ENCODE measurements at regions of chr3 and their contacts with region 1.

Region 1: DNA sequence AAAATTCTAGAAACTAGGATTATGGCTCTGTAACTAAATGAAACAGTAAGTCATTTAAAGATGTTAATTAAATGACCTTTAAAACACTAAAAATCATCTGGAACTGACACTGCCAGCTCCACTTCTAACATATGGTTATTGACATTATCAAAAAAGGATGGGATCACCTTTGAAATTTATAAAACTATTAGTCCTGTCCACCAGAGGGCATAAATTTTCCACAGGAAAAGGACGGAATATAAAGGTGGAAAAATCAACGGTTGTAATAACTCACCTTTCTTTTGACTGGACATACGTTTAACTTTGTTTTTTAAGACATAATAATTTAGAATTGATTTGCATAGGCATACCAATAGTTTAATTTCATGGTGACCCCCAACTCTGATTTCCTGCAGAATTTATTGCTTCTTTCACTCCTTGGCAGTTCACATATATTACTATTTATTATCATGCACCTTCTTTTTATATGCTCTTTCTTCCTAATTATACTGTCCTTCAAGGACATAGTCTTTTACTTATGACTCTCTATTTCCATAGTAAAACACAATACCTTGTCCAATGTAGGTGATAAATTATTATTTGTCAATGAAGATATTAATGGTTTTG is 345.7 kb downstream of the CADM2 start:
- DNase-seq: no peak
- H3K4me3 ChIP-seq: no peak overlapping the region
- H3K27ac ChIP-seq: no peak overlapping the region
- H3K4me1 ChIP-seq: no peaks in the 10 kb centered on the region
- H3K27me3 ChIP-seq: no peaks in the 10 kb centered on the region
- CTCF ChIP-seq: peak; percentile 66; the same call in 1 of the 2 replicates

Region 2: DNA sequence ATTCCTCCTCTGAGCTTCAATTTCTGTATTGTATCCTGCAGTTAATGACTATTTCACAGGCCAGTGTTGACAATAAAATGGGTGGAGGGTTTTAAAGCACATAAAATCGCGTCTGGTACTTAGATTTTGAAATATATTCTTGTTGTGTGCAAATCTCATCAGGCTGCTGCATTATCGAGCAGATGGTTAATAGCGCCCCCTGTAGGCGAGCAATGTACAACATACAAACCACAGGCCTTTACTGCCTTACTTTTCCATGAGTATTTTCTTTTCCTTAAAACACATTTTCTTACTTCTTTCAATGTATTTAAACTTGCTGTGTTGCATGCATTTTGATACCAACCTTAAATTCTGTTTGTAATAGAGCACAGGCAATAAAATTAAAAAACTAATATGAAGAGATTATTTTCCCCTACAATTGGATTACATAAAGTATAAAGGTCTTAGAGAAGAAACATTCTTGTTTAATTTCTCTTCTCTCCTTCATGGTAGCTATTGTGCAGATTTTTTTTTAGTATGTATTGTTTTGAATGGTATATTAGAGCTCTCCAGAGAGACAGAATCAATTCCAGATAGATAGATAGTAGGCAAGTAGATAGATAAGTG is 262.7 kb after region 1 on chr3:
- CTCF ChIA-PET with region 1: no interaction called
- POLR2A ChIA-PET with region 1: no interaction called
- intact Hi-C with region 1: loop called (anchors 10 kb)
- DNase-seq: peak in 1 of 2 experiments; percentile 15
- H3K4me3 ChIP-seq: no peak overlapping the region
- H3K27ac ChIP-seq: no peak overlapping the region
- H3K4me1 ChIP-seq: no peaks in the 10 kb centered on the region
- H3K27me3 ChIP-seq: no peaks in the 10 kb centered on the region
- CTCF ChIP-seq: peak; percentile 69

Region 3: GRCh38 chr3:85594676-85595075 is 290.2 kb after region 1 on chr3:
- CTCF ChIA-PET with region 1: no interaction called
- POLR2A ChIA-PET with region 1: no interaction called
- intact Hi-C with region 1: no loop called
- DNase-seq: no peak
- H3K4me3 ChIP-seq: no peak overlapping the region
- H3K27ac ChIP-seq: no peak overlapping the region
- H3K4me1 ChIP-seq: no peaks in the 10 kb centered on the region
- H3K27me3 ChIP-seq: no peaks in the 10 kb centered on the region
- CTCF ChIP-seq: no peak

Region 4: GRCh38 chr3:85801955-85802354 is 497.5 kb after region 1 on chr3:
- CTCF ChIA-PET with region 1: no interaction called
- POLR2A ChIA-PET with region 1: no interaction called
- intact Hi-C with region 1: loop called (anchors 5 kb)
- DNase-seq: no peak
- H3K4me3 ChIP-seq: no peak overlapping the region
- H3K27ac ChIP-seq: no peak overlapping the region
- H3K4me1 ChIP-seq: no peaks in the 10 kb centered on the region
- H3K27me3 ChIP-seq: no peaks in the 10 kb centered on the region
- CTCF ChIP-seq: peak; percentile 45; the same call in 1 of the 2 replicates